Endothelial cell of umbilical vein (primary cell): ENCODE measurements at regions of chr17 and their contacts with region 1.

Region 1: GRCh38 chr17:17919169-17920107 is 52.8 kb downstream of the TOM1L2 start:
- DNase-seq: peak; percentile 78
- H3K4me3 ChIP-seq: no peak overlapping the region
- H3K27ac ChIP-seq: peak overlapping the region; percentile 12
- H3K4me1 ChIP-seq: peaks cover 28% of the 10 kb centered on the region
- H3K27me3 ChIP-seq: no peaks in the 10 kb centered on the region
- CTCF ChIP-seq: peak; percentile 78 to 81
- POLR2A ChIP-seq: no peak

Region 2: GRCh38 chr17:17681187-17681848 is 238.1 kb before region 1 on chr17 and contains the start of gene RAI1:
- CTCF ChIA-PET with region 1: interaction called, 11 read pairs
- POLR2A ChIA-PET with region 1: no interaction called
- dilution Hi-C with region 1: no loop called
- intact Hi-C with region 1: loop called (anchors 2 kb)
- DNase-seq: peak; percentile 75
- H3K4me3 ChIP-seq: peak within 1 kb of the TSS; percentile 65 to 91 (median 69)
- H3K27ac ChIP-seq: peak within 1 kb of the TSS; percentile 79
- H3K4me1 ChIP-seq: peaks cover 34% of the 10 kb centered on the region
- H3K27me3 ChIP-seq: no peaks in the 10 kb centered on the region
- CTCF ChIP-seq: peak; percentile 51 to 79
- POLR2A ChIP-seq: no peak
- total RNA-seq, gene RAI1: 43.3 and 47.3 TPM in 2 replicates

Region 3: DNA sequence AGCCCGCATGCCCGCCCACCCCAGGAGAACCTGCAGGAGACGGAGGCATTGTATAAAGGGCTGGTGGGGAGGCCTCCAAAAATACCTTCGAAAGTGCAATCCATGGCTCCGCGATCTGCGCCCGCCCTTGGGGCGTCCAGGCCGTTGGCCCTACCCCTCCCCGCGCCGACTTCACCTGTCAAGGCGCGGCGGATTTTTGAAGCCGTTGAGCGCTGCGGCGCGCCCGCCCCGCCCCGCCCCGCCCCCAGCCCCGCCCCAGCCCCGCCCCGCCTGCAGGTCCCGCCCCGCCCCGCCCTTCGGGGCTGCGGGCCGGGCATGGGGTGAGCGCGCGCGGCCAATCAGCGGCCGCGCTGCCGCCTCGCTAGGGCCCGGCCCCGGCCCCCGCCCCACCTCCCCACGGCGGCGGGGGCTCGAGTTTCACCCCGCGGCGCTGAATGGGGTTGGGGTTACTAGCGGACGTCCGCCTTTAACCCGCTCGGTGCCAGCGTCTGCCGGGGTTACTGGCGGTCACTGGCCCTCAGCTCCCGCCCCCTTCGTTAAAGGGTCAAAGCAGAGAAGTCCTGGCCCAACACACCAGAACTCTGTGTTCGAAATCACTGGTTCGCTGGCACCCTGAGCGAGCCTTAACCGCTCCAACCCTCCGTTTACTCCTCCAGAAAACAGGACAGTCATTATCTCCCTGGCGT is 95.9 kb before region 1 on chr17:
- CTCF ChIA-PET with region 1: interaction called, 11 read pairs
- POLR2A ChIA-PET with region 1: no interaction called
- dilution Hi-C with region 1: no loop called
- intact Hi-C with region 1: no loop called
- DNase-seq: peak; percentile 68
- H3K4me3 ChIP-seq: peak overlapping the region in 1 of 3 experiments; percentile 22
- H3K27ac ChIP-seq: peak overlapping the region; percentile 53
- H3K4me1 ChIP-seq: peaks cover 34% of the 10 kb centered on the region
- H3K27me3 ChIP-seq: no peaks in the 10 kb centered on the region
- CTCF ChIP-seq: no peak
- POLR2A ChIP-seq: no peak

Region 4: DNA sequence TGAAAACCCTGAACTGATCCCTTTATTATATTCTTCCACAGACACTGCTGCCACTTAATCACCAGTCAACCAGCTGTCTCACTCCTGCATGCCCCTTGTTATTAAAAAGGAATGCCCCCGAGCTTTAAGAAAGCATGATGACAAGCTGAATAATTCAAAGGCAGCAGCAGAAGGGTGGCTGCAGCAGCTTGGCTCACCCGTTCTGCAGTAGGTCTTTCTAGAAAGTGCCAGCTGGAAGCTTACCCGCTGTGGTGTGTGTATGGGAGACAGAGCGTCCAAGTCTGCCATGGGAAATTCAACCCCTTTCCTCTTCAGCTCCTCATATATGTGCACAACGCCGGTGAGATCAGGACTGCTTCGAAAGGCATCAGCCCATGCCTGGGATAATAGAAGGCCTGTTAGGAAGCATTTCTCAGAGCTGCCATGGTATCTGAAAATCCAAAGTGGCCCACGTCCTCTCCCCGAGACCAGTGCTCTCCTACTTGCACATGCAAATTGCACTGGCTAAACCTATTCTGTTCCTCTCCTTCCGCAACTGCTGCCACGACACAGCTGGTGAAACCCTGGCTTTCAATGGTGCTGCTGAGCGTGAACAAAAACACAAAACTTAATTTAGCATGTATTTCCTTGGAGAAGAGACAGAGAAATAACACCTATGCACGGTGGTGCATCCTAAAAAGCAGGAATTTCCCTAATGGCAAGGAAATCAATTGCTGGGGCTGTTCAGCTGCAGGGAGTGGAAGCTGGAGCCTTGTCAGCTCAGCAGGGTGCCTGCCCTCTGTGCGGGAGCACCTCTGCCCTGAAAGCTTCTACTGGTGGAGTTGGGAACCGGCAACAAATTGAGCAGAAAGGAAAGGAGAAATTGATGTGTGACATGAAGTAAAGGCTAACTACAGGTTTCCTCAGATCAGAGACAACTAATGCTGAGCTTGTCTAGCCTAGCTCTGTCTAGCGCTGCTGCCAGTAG is 34.8 kb before region 1 on chr17:
- CTCF ChIA-PET with region 1: interaction called, 175 read pairs
- POLR2A ChIA-PET with region 1: no interaction called
- dilution Hi-C with region 1: no loop called
- intact Hi-C with region 1: loop called (anchors 5 kb)
- DNase-seq: no peak
- H3K4me3 ChIP-seq: no peak overlapping the region
- H3K27ac ChIP-seq: no peak overlapping the region
- H3K4me1 ChIP-seq: peaks cover 4% of the 10 kb centered on the region
- H3K27me3 ChIP-seq: no peaks in the 10 kb centered on the region
- CTCF ChIP-seq: no peak
- POLR2A ChIP-seq: no peak

Region 5: GRCh38 chr17:17906418-17907215 is 12.8 kb before region 1 on chr17:
- CTCF ChIA-PET with region 1: interaction called, 44 read pairs
- POLR2A ChIA-PET with region 1: no interaction called
- dilution Hi-C with region 1: no loop called
- intact Hi-C with region 1: loop called (anchors 2 kb)
- DNase-seq: peak; percentile 66
- H3K4me3 ChIP-seq: no peak overlapping the region
- H3K27ac ChIP-seq: peak overlapping the region; percentile 3
- H3K4me1 ChIP-seq: peaks cover 14% of the 10 kb centered on the region
- H3K27me3 ChIP-seq: no peaks in the 10 kb centered on the region
- CTCF ChIP-seq: no peak
- POLR2A ChIP-seq: no peak

Region 6: GRCh38 chr17:17972126-17972951 is 52.9 kb after region 1 on chr17 and contains the starts of genes DRC3 and TOM1L2:
- CTCF ChIA-PET with region 1: interaction called, 21 read pairs
- POLR2A ChIA-PET with region 1: interaction called, 3 read pairs
- dilution Hi-C with region 1: no loop called
- intact Hi-C with region 1: loop called (anchors 1 kb)
- DNase-seq: peak; percentile 100
- H3K4me3 ChIP-seq: peak within 1 kb of the TSS; percentile 79 to 87 (median 82)
- H3K27ac ChIP-seq: peak within 1 kb of the TSS; percentile 67
- H3K4me1 ChIP-seq: peaks cover 17% of the 10 kb centered on the region
- H3K27me3 ChIP-seq: no peaks in the 10 kb centered on the region
- CTCF ChIP-seq: no peak
- POLR2A ChIP-seq: peak; percentile 78
- total RNA-seq, gene DRC3: 1.6 and 2.3 TPM in 2 replicates
- total RNA-seq, gene TOM1L2: 37.6 and 41.5 TPM in 2 replicates